GM10248 (cell line): ENCODE measurements at regions of chr14 and their contacts with region 1.

Region 1: DNA sequence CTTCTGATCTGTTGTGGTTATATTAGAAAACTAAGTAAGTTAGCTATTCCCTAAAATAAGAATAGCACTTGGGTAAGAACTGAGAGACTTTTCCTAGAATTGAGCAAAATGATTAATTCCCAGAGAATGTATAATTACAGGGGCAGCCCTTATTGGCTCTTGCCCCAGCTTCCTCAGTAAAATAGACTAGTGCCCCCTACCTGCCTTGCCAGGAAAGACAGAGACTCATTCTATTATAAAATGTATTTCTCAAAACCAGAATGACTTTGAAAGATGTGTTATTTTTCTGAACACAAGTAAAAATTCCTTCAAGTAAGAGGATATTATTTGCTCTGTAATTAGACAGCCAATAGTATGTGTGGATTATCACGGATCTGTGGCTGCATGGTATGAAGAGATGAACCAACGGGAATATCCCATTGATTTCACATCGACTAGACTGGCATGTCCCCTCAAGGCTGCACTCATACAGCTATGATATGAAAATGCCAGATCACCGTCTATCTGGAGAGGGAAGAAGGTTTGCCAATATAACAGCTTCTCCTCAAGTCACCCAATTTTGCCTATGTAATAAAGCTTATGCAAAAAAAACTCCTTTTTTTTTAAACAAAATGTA is 7.4 kb upstream of the GLRX5 start:
- DNase-seq: peak; percentile 42
- CTCF ChIP-seq: peak; percentile 54

Region 2: GRCh38 chr14:95345032-95345431 is 182.5 kb before region 1 on chr14:
- CTCF ChIA-PET with region 1: no interaction called
- POLR2A ChIA-PET with region 1: no interaction called
- DNase-seq: no peak
- CTCF ChIP-seq: no peak

Region 3: GRCh38 chr14:95424529-95424928 is 103.0 kb before region 1 on chr14:
- CTCF ChIA-PET with region 1: interaction called, 31 read pairs
- POLR2A ChIA-PET with region 1: no interaction called
- DNase-seq: no peak
- CTCF ChIP-seq: no peak

Region 4: GRCh38 chr14:95442633-95443021 is 84.9 kb before region 1 on chr14:
- CTCF ChIA-PET with region 1: interaction called, 152 read pairs
- POLR2A ChIA-PET with region 1: no interaction called
- DNase-seq: peak; percentile 88
- CTCF ChIP-seq: peak; percentile 88

Region 5: DNA sequence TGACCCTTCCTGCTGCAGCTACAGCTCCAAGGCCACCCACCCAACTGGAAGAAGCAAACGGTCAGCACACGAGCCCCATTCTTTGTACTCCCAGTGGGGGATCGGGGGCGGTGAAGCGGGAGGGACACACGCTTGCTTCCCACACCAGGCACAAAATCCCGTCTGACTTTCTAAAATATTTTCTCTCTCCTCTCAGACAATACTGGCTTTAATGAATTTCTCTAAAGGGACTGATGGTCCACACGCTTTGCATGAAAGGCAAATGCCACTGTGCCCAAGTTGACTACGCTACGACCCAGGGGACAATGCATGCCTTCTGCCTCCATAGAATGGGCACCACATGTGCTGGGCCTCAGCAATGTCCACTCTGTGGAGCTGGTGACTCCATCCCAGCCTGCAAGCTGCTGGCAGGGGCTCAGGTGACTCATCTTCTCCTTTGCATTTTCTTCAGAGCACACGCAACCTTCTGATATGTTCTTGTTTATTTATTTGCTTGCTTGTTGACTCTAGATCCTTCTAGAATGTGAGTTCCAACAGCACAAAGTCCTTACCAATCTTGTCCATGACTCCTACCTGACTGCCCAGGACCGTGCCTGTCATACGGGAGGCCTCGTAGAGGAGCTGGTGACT is 26.6 kb before region 1 on chr14:
- CTCF ChIA-PET with region 1: interaction called, 34 read pairs
- POLR2A ChIA-PET with region 1: no interaction called
- DNase-seq: no peak
- CTCF ChIP-seq: no peak

Region 6: GRCh38 chr14:95515596-95516552 is 11.6 kb before region 1 on chr14:
- CTCF ChIA-PET with region 1: interaction called, 110 read pairs
- POLR2A ChIA-PET with region 1: no interaction called
- DNase-seq: peak; percentile 92
- CTCF ChIP-seq: peak; percentile 30